K562 (cell line): ENCODE measurements at regions of chr16 and their contacts with region 1.

Region 1: GRCh38 chr16:29862884-29863668 is at the start of gene CDIPT:
- DNase-seq: peak; percentile 90 to 98 (median 92)
- ATAC-seq: peak; percentile 97
- H3K4me3 ChIP-seq: peak within 1 kb of the TSS; percentile 98
- H3K27ac ChIP-seq: peak within 1 kb of the TSS; percentile 99
- H3K4me1 ChIP-seq: peaks cover 0 to 32% of the 10 kb centered on the region in 2 experiments; a peak in 3 of 5 replicates
- H3K27me3 ChIP-seq: no peaks in the 10 kb centered on the region; a peak in 1 of 5 replicates
- CTCF ChIP-seq: peak; percentile 87 to 91 (median 90)
- EP300 ChIP-seq: no peak
- POLR2A ChIP-seq: peak; percentile 60; the same call in 1 of the 2 replicates
- RAD21 ChIP-seq: peak; percentile 40 to 53; a peak in 3 of 4 replicates
- polyA plus RNA-seq, gene CDIPT: 1.3 to 2.1 TPM

Region 2: DNA sequence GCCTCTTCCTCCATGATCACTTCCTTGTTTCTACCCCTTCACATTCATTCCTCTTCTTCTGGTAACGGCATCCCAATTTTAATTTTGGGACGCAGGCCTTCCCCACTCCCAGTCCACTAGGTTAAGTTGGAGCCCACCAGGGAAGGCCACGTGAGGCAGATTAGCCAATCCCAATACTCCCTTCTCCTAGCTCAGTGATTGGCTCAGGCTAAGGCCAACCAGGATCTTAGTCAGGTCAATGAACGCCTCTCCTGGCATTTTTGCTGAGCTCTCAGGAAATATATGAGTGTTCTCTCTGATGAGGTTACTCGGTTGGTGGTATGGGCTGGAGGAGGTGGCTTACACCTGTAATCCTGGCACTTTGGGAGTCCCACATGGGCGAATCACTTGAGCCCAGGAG is 20.9 kb after region 1 on chr16:
- CTCF ChIA-PET with region 1: no interaction called
- POLR2A ChIA-PET with region 1: no interaction called
- in situ Hi-C with region 1: no loop called
- intact Hi-C with region 1: no loop called
- DNase-seq: peak in 3 of 4 experiments; percentile 31 to 71 (median 42)
- ATAC-seq: peak; percentile 88
- H3K4me3 ChIP-seq: no peak overlapping the region
- H3K27ac ChIP-seq: no peak overlapping the region
- H3K4me1 ChIP-seq: peaks cover 0 to 4% of the 10 kb centered on the region in 2 experiments; a peak in 1 of 5 replicates
- H3K27me3 ChIP-seq: peaks cover 18 to 36% of the 10 kb centered on the region in 2 experiments; a peak in 4 of 5 replicates
- CTCF ChIP-seq: no peak
- EP300 ChIP-seq: no peak
- POLR2A ChIP-seq: no peak
- RAD21 ChIP-seq: no peak

Region 3: GRCh38 chr16:29926005-29926710 is 63.1 kb after region 1 on chr16 and contains the start of gene KCTD13:
- CTCF ChIA-PET with region 1: no interaction called
- POLR2A ChIA-PET with region 1: no interaction called
- in situ Hi-C with region 1: no loop called
- intact Hi-C with region 1: no loop called
- DNase-seq: peak; percentile 87 to 99 (median 98)
- ATAC-seq: peak; percentile 97
- H3K4me3 ChIP-seq: peak within 1 kb of the TSS; percentile 91
- H3K27ac ChIP-seq: peak within 1 kb of the TSS; percentile 93
- H3K4me1 ChIP-seq: peaks cover 13 to 29% of the 10 kb centered on the region in 2 experiments; a peak in 4 of 5 replicates
- H3K27me3 ChIP-seq: no peaks in the 10 kb centered on the region
- CTCF ChIP-seq: no peak
- EP300 ChIP-seq: no peak
- POLR2A ChIP-seq: peak; percentile 93
- RAD21 ChIP-seq: no peak; a peak in 1 of 4 replicates
- polyA plus RNA-seq, gene KCTD13: 1.0 to 2.3 TPM

Region 4: GRCh38 chr16:29951625-29952365 is 88.7 kb after region 1 on chr16:
- CTCF ChIA-PET with region 1: no interaction called
- POLR2A ChIA-PET with region 1: no interaction called
- in situ Hi-C with region 1: no loop called
- intact Hi-C with region 1: no loop called
- DNase-seq: no peak
- ATAC-seq: peak; percentile 45; the same call in 2 of the 3 replicates
- H3K4me3 ChIP-seq: no peak overlapping the region
- H3K27ac ChIP-seq: no peak overlapping the region
- H3K4me1 ChIP-seq: peaks cover 0 to 3% of the 10 kb centered on the region in 2 experiments; a peak in 1 of 5 replicates
- H3K27me3 ChIP-seq: no peaks in the 10 kb centered on the region
- CTCF ChIP-seq: no peak
- EP300 ChIP-seq: no peak
- POLR2A ChIP-seq: no peak
- RAD21 ChIP-seq: no peak

Region 5: GRCh38 chr16:30005341-30006094 is 142.4 kb after region 1 on chr16:
- CTCF ChIA-PET with region 1: interaction called, 5 read pairs
- POLR2A ChIA-PET with region 1: interaction called, 3 read pairs
- in situ Hi-C with region 1: no loop called
- intact Hi-C with region 1: loop called (anchors 5 kb)
- DNase-seq: peak; percentile 61 to 83 (median 74)
- ATAC-seq: peak; percentile 87
- H3K4me3 ChIP-seq: no peak overlapping the region
- H3K27ac ChIP-seq: no peak overlapping the region
- H3K4me1 ChIP-seq: peaks cover 0 to 68% of the 10 kb centered on the region in 2 experiments; a peak in 2 of 5 replicates
- H3K27me3 ChIP-seq: peaks cover 0 to 9% of the 10 kb centered on the region in 2 experiments; a peak in 3 of 5 replicates
- CTCF ChIP-seq: peak; percentile 88
- EP300 ChIP-seq: no peak
- POLR2A ChIP-seq: no peak
- RAD21 ChIP-seq: peak; percentile 73 to 80